B cell (primary cell): ENCODE measurements at regions of chr10 and their contacts with region 1.

Region 1: DNA sequence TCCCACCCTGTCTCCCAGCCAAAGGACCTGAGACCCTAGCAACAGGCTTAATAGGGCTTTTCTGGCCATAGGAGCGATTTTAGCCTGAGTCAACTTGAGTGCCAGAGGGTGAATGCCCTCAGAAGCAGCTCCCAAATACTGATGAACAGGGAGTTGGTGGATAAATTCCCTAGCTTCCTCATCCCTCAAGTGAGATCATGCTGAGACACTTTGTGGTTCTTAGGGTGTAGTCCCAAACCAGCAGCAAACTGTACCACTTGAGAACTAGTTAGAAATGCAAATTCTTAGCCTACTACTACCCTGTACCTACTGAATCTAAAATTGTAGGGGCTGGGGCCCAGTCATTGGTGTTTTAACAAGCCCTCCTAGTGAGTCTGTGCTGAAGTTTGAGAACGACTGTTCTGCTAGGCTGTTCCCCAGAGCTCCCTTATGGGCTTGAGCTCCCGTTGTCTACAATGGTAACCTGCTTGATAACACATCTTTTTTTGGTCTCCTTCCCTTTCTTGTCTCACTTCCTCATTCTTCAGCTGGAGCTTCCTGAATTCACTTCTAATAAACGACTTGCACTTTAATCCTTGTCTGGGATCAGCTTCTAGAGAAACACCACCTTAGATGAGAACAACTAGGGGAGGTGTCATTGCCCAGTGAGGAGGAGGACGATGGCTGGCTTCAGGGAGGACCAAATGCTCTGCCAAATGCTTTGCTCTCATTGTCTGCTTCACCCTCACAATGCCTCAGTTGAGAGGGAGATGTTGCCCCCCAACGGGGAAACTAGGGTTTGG is 18.2 kb upstream of the CDH23 start:
- DNase-seq: peak; percentile 70
- ATAC-seq: no peak
- H3K4me3 ChIP-seq: peak overlapping the region in 1 of 5 experiments; percentile 22
- H3K4me3 Mint-ChIP-seq: peak overlapping the region; percentile 65
- H3K27ac ChIP-seq: peak overlapping the region; percentile 11 to 48
- H3K27ac Mint-ChIP-seq: peak overlapping the region; percentile 84
- H3K4me1 ChIP-seq: peaks cover 31 to 47% of the 10 kb centered on the region in 2 donors
- H3K4me1 Mint-ChIP-seq: peaks cover 37% of the 10 kb centered on the region
- H3K27me3 ChIP-seq: no peaks in the 10 kb centered on the region
- H3K27me3 Mint-ChIP-seq: no peaks in the 10 kb centered on the region
- CTCF ChIP-seq: no peak

Region 2: GRCh38 chr10:69783515-69783914 is 1595.0 kb before region 1 on chr10:
- CTCF ChIA-PET with region 1: no interaction called
- POLR2A ChIA-PET with region 1: no interaction called
- intact Hi-C with region 1: no loop called
- DNase-seq: no peak
- ATAC-seq: no peak
- H3K4me3 ChIP-seq: no peak overlapping the region
- H3K4me3 Mint-ChIP-seq: no peak overlapping the region
- H3K27ac ChIP-seq: no peak overlapping the region
- H3K27ac Mint-ChIP-seq: no peak overlapping the region
- H3K4me1 ChIP-seq: no peaks in the 10 kb centered on the region
- H3K4me1 Mint-ChIP-seq: no peaks in the 10 kb centered on the region
- H3K27me3 ChIP-seq: peaks cover 0 to 4% (median 0%) of the 10 kb centered on the region in 4 experiments
- H3K27me3 Mint-ChIP-seq: peaks cover 14% of the 10 kb centered on the region
- CTCF ChIP-seq: no peak

Region 3: GRCh38 chr10:71569775-71570588 is 191.5 kb after region 1 on chr10:
- CTCF ChIA-PET with region 1: interaction called, 72 read pairs
- POLR2A ChIA-PET with region 1: no interaction called
- intact Hi-C with region 1: no loop called
- DNase-seq: peak; percentile 77
- ATAC-seq: peak; percentile 57
- H3K4me3 ChIP-seq: no peak overlapping the region
- H3K4me3 Mint-ChIP-seq: no peak overlapping the region
- H3K27ac ChIP-seq: no peak overlapping the region
- H3K27ac Mint-ChIP-seq: no peak overlapping the region
- H3K4me1 ChIP-seq: no peaks in the 10 kb centered on the region
- H3K4me1 Mint-ChIP-seq: no peaks in the 10 kb centered on the region
- H3K27me3 ChIP-seq: no peaks in the 10 kb centered on the region
- H3K27me3 Mint-ChIP-seq: peaks cover 5% of the 10 kb centered on the region
- CTCF ChIP-seq: peak; percentile 86

Region 4: DNA sequence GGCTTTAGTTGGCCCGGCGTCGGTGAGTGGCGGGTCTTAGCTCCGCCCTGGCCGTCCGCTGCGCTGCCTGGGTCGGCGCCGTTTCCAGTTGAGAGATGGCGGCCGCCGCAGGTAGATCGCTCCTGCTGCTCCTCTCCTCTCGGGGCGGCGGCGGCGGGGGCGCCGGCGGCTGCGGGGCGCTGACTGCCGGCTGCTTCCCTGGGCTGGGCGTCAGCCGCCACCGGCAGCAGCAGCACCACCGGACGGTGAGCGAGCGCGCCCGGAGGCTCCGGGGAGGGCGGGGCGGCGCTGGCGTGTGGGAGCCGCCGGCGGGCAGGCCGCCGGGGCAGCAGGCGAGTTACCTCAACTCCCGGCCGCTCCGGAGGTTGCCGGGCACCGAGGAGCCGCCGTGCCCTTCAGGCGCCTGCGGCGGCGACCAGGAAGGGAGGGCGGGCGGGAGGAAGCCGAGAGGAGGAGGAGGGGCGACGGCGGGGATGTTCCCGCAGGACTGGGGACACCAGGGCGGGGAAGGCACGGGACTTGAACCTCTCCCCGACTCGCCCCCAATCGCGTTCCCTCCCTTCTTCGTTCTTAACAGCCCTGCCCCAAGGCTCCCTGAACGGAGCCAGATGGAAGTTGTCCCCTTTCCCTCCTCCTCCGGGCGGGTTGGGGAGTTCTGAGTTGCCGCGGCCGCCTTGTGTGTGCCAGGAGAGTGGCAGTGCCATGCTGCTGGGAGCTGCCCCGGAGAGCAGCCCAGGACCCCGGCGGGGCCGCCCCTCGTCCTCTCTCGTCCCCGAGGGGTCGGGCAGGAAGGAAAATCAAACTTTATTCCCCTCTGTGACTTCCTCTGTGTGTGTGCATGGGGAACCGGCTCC is 1313.8 kb after region 1 on chr10 and contains the start of gene MCU:
- CTCF ChIA-PET with region 1: no interaction called
- POLR2A ChIA-PET with region 1: no interaction called
- intact Hi-C with region 1: loop called (anchors 5 kb)
- DNase-seq: peak; percentile 94
- ATAC-seq: peak; percentile 95
- H3K4me3 ChIP-seq: peak within 1 kb of the TSS; percentile 64 to 91 (median 79)
- H3K4me3 Mint-ChIP-seq: peak within 1 kb of the TSS; percentile 95
- H3K27ac ChIP-seq: peak within 1 kb of the TSS; percentile 58 to 72
- H3K27ac Mint-ChIP-seq: peak within 1 kb of the TSS; percentile 91
- H3K4me1 ChIP-seq: peaks cover 28 to 33% of the 10 kb centered on the region in 2 donors
- H3K4me1 Mint-ChIP-seq: peaks cover 43% of the 10 kb centered on the region
- H3K27me3 ChIP-seq: no peaks in the 10 kb centered on the region
- H3K27me3 Mint-ChIP-seq: no peaks in the 10 kb centered on the region
- CTCF ChIP-seq: no peak
- total RNA-seq, gene MCU: 17.6 and 21.1 TPM in 2 replicates